AG04450 (cell line): ENCODE measurements at regions of chr13 and their contacts with region 1.

Region 1: GRCh38 chr13:24727731-24728601 is 36.0 kb upstream of the RNF17 start:
- DNase-seq: peak; percentile 71
- H3K4me3 ChIP-seq: no peak overlapping the region
- H3K27ac ChIP-seq: no peak overlapping the region
- H3K27me3 ChIP-seq: peaks cover 5% of the 10 kb centered on the region
- CTCF ChIP-seq: peak; percentile 85

Region 2: GRCh38 chr13:24574847-24575246 is 153.1 kb before region 1 on chr13:
- CTCF ChIA-PET with region 1: interaction called, 17 read pairs
- POLR2A ChIA-PET with region 1: no interaction called
- DNase-seq: no peak
- H3K4me3 ChIP-seq: no peak overlapping the region
- H3K27ac ChIP-seq: no peak overlapping the region
- H3K27me3 ChIP-seq: no peaks in the 10 kb centered on the region
- CTCF ChIP-seq: no peak

Region 3: GRCh38 chr13:24605923-24606372 is 122.0 kb before region 1 on chr13:
- CTCF ChIA-PET with region 1: interaction called, 25 read pairs
- POLR2A ChIA-PET with region 1: interaction called, 3 read pairs
- DNase-seq: no peak
- H3K4me3 ChIP-seq: no peak overlapping the region
- H3K27ac ChIP-seq: no peak overlapping the region
- H3K27me3 ChIP-seq: peaks cover under 1% of the 10 kb centered on the region
- CTCF ChIP-seq: peak; percentile 41

Region 4: DNA sequence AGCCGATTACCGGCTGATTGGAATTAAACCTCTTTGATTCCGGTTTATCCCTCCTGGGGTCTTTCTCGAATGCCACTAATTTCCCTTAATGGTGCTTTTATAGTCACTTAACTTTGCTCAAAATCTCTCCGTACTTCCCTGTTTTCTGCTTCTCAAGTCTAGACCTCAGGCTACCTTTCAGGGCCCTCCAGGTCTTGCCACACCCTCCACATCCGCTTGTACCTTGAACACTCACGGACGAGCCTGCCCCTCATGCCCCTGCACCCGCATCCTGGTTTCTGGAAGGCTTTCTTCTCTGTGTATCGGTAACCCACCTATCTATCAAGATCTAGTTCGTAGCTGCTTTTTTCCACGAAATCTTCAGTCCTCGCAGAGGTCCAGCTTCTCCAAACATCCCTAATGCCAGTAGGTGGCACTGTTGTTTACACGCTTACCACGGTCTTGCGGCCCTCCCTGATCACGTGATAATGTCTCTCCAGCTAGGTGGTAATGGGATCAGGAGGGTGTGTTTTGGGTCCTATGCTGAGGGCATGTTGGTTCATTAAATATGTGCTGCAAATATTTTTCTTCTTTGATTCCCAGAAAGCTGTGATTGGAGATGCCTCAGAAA is 34.0 kb before region 1 on chr13:
- CTCF ChIA-PET with region 1: interaction called, 10 read pairs
- POLR2A ChIA-PET with region 1: no interaction called
- DNase-seq: no peak
- H3K4me3 ChIP-seq: no peak overlapping the region
- H3K27ac ChIP-seq: no peak overlapping the region
- H3K27me3 ChIP-seq: no peaks in the 10 kb centered on the region
- CTCF ChIP-seq: peak; percentile 60

Region 5: GRCh38 chr13:24713022-24713421 is 14.9 kb before region 1 on chr13:
- CTCF ChIA-PET with region 1: interaction called, 23 read pairs
- POLR2A ChIA-PET with region 1: no interaction called
- DNase-seq: no peak
- H3K4me3 ChIP-seq: no peak overlapping the region
- H3K27ac ChIP-seq: no peak overlapping the region
- H3K27me3 ChIP-seq: peaks cover 3% of the 10 kb centered on the region
- CTCF ChIP-seq: no peak

Region 6: GRCh38 chr13:24777171-24777570 is 49.2 kb after region 1 on chr13:
- CTCF ChIA-PET with region 1: interaction called, 10 read pairs
- POLR2A ChIA-PET with region 1: no interaction called
- DNase-seq: no peak
- H3K4me3 ChIP-seq: no peak overlapping the region
- H3K27ac ChIP-seq: no peak overlapping the region
- H3K27me3 ChIP-seq: no peaks in the 10 kb centered on the region
- CTCF ChIP-seq: no peak

Region 7: GRCh38 chr13:24900507-24900906 is 172.5 kb after region 1 on chr13:
- CTCF ChIA-PET with region 1: no interaction called
- POLR2A ChIA-PET with region 1: no interaction called
- DNase-seq: no peak
- H3K4me3 ChIP-seq: no peak overlapping the region
- H3K27ac ChIP-seq: no peak overlapping the region
- H3K27me3 ChIP-seq: no peaks in the 10 kb centered on the region
- CTCF ChIP-seq: no peak

Region 8: GRCh38 chr13:24922745-24923591 is 195.0 kb after region 1 on chr13:
- CTCF ChIA-PET with region 1: no interaction called
- POLR2A ChIA-PET with region 1: interaction called, 11 read pairs
- DNase-seq: peak; percentile 93
- H3K4me3 ChIP-seq: peak overlapping the region; percentile 87
- H3K27ac ChIP-seq: peak overlapping the region; percentile 100
- H3K27me3 ChIP-seq: no peaks in the 10 kb centered on the region
- CTCF ChIP-seq: no peak